Ascending aorta (tissue), 2 donors: ENCODE measurements at regions of chr7 and their contacts with region 1.

Region 1: DNA sequence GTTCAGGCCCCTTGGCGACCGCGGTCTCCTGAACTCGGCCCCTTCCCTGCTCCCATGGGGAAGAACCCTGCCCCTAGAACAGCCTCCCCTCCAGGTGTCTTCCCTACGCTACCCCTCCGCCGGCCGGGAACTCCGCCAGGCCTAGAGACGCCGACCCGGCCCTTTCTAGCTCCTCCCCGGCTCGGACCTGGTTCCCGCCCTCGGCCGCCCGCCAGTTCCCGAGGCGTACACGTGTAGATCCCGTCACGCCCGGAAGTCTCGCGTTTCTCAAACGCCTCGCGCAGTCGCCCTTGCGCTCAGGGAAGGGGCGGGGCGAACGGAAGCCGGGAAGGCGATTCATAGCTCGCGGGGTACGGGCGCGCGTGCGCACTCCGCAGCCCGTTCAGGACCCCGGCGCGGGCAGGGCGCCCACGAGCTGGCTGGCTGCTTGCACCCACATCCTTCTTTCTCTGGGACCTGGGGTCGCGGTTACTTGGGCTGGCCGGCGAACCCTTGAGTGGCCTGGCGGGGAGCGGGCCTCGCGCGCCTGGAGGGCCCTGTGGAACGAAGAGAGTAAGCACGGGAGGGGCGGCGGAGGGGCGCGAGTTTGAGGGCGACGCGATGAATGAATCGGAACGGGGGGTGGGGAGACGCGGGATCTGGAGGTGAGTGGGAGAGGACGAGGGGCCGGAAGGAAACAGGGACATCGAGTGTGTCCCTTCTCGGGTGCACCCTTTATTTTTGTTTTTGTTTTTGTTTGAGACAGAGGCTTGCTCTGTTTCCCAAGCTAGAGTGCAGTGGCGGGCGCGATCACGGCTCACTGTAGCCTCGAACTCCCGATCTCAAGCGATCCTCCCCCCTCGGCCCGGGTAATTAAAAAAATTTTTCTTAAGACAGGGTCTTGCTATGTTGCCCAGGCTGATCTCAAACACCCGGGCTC is at the start of gene POP7:
- DNase-seq: peak; percentile 88 to 99
- H3K4me3 ChIP-seq: peak within 1 kb of the TSS; percentile 89 to 99
- H3K27ac ChIP-seq: peak within 1 kb of the TSS; percentile 90 to 96
- H3K4me1 ChIP-seq: peaks cover 7 to 10% of the 10 kb centered on the region in 2 donors
- H3K27me3 ChIP-seq: no peaks in the 10 kb centered on the region
- CTCF ChIP-seq: no peak
- total RNA-seq, gene POP7: 44.0 TPM

Region 2: GRCh38 chr7:100380196-100380595 is 325.8 kb before region 1 on chr7:
- intact Hi-C with region 1: no loop called
- DNase-seq: no peak
- H3K4me3 ChIP-seq: no peak overlapping the region
- H3K27ac ChIP-seq: peak overlapping the region; percentile 18 to 33
- H3K4me1 ChIP-seq: no peaks in the 10 kb centered on the region
- H3K27me3 ChIP-seq: no peaks in the 10 kb centered on the region
- CTCF ChIP-seq: no peak

Region 3: DNA sequence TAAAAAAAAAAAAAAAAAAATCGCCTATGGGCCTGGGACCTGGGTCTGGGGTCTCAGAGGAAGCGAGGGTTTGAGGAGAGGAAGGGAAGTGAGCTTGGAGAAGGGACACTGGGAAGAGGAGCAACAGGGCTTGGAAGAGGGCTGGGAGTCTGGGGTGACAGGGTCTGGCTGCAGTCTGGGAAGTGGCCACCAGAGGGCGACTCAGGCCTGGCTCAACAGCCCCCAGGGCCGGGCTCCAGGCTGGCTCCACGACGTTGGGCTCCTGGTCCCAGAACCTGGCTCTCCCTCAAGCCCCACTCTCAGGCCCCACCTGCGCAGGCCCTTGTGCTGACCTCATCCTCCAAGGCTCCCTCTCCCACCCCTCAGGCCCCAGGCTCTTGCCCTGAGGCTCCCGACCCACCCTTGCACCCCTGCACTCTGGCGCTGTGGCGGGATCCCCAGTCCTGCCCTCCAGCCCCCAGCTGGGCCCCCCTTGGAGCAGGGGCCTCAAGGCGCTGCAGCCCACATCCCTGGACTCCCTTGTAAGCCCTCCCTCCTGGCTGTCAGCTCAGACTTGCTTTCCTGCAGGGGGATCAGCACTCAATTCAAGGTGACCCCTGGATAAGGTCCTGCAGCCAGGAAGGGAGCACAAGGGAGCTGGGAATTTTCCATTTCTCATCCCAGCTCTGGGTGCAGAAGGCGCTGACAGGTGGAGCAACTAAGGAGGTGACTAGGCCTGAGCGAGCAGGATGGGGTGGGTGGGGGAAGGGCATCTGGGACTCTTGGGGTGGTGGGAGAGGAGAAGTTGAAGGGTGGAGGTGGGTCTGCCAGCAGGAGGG is 236.6 kb before region 1 on chr7:
- intact Hi-C with region 1: loop called (anchors 5 kb)
- DNase-seq: peak in 1 of 2 donors; percentile 90
- H3K4me3 ChIP-seq: no peak overlapping the region
- H3K27ac ChIP-seq: no peak overlapping the region
- H3K4me1 ChIP-seq: peaks cover 17 to 26% of the 10 kb centered on the region in 2 donors
- H3K27me3 ChIP-seq: no peaks in the 10 kb centered on the region
- CTCF ChIP-seq: peak; percentile 87 to 97 (median 95)

Region 4: DNA sequence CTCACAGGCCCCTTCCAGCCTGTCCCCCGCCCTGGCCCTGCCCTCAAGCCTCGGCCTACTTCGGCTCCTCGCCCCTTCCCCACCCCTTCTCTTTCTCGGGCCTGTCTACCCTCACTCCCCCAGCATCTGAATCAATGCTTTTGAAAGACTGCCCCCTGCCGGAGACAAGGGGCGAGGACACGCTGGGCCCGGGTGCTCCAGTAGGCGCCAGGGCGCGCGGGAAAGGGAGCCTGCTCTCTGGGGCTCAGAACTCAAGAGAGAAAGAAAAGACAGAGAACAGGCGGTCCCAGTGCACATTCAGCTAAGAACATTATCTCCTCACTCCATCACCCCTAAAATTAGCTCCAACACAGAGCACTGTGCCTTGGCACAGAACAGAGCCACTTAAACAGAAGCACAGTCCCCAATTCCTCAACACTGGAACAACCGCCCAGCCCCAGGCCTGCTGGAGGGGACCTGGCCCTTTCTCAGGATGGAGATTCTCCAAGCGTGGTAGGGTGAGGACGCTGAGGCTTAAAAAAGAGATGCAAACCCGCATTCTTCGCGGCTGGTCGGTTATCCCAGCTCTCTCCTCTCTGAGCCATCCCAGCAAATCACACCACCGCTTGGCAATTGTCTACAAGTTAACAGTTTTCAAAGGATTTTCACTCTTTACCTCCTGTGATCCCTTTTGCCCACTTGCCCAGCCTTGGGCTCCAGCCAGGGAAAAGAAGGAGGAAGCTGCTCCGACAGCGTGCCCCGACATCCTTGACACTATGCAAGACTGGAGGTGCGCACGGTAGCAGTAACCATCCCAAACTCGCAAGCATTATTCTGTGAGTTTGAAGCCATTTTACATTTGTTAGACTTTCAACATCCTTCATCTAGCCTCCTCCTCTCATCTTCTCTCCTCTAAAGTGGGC is 14.1 kb before region 1 on chr7:
- intact Hi-C with region 1: loop called (anchors 1 kb)
- DNase-seq: peak in 1 of 2 donors; percentile 86
- H3K4me3 ChIP-seq: peak overlapping the region; percentile 92 to 96
- H3K27ac ChIP-seq: peak overlapping the region in 1 of 2 donors; percentile 20
- H3K4me1 ChIP-seq: peaks cover 10 to 30% of the 10 kb centered on the region in 2 donors
- H3K27me3 ChIP-seq: no peaks in the 10 kb centered on the region
- CTCF ChIP-seq: peak; percentile 85 to 97 (median 92)

Region 5: DNA sequence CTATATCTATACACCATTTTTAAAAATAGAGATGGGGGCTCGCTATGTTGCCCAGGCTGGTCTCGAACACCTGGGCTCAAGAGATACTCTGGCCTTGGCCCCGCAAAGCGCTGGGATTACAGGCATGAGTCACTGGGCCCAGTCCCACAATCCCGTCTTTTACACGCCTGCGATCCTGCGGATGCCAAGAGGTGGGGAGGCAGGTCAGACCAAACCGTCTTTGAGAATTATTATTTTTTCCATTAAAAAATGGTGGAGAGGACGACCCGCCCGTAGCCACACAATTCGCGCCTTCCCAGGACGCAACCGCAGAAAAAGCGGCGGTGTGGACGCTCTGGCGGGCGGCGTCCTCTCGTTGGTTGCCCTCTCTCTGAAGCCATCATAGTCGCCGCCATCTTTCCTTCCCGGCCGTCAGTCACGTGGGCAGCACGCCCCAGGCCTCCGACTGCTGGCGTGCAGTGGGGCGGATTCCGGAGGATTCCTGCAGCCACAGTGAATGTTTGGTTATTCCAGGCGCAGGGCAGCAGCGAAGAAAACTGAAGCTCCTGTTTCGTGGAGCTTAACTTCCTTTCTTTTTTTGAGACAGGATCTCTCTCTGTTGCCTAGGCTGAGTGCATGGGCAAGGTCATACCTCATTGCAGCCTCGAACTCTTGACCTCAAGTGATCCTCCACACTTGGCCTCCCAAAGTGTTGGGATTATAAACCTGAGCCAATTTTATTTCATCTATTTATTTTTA is 131.3 kb after region 1 on chr7:
- intact Hi-C with region 1: loop called (anchors 5 kb)
- DNase-seq: peak; percentile 56 to 93
- H3K4me3 ChIP-seq: peak overlapping the region; percentile 35 to 55
- H3K27ac ChIP-seq: peak overlapping the region; percentile 48 to 62
- H3K4me1 ChIP-seq: peaks cover 0 to 3% of the 10 kb centered on the region in 2 donors
- H3K27me3 ChIP-seq: no peaks in the 10 kb centered on the region
- CTCF ChIP-seq: no peak

Region 6: GRCh38 chr7:100889761-100890634 is 184.0 kb after region 1 on chr7:
- intact Hi-C with region 1: loop called (anchors 1 kb)
- DNase-seq: peak; percentile 56 to 96
- H3K4me3 ChIP-seq: peak overlapping the region; percentile 70 to 74
- H3K27ac ChIP-seq: peak overlapping the region; percentile 76 to 79
- H3K4me1 ChIP-seq: peaks cover 6 to 17% of the 10 kb centered on the region in 2 donors
- H3K27me3 ChIP-seq: no peaks in the 10 kb centered on the region
- CTCF ChIP-seq: no peak